HepG2 (cell line): ENCODE measurements at regions of chr6 and their contacts with region 1.

Region 1: GRCh38 chr6:48111143-48111506 is at the start of gene PTCHD4:
- DNase-seq: peak; percentile 86
- ATAC-seq: peak; percentile 99
- H3K4me3 ChIP-seq: peak within 1 kb of the TSS; percentile 59 to 93 (median 73)
- H3K27ac ChIP-seq: peak within 1 kb of the TSS; percentile 97
- H3K4me1 ChIP-seq: peaks cover 32% of the 10 kb centered on the region
- H3K27me3 ChIP-seq: no peaks in the 10 kb centered on the region; a peak in 2 of 5 replicates
- CTCF ChIP-seq: 0 out of 2 replicates have a peak, but pooled peaks have one; percentile 21
- EP300 ChIP-seq: peak in 1 of 2 experiments; percentile 50; a peak in 1 of 4 replicates
- POLR2A ChIP-seq: peak; percentile 75 to 89; a peak in 3 of 4 replicates
- RAD21 ChIP-seq: no peak
- total RNA-seq, gene PTCHD4: 32.9 and 35.7 TPM in 2 replicates

Region 2: DNA sequence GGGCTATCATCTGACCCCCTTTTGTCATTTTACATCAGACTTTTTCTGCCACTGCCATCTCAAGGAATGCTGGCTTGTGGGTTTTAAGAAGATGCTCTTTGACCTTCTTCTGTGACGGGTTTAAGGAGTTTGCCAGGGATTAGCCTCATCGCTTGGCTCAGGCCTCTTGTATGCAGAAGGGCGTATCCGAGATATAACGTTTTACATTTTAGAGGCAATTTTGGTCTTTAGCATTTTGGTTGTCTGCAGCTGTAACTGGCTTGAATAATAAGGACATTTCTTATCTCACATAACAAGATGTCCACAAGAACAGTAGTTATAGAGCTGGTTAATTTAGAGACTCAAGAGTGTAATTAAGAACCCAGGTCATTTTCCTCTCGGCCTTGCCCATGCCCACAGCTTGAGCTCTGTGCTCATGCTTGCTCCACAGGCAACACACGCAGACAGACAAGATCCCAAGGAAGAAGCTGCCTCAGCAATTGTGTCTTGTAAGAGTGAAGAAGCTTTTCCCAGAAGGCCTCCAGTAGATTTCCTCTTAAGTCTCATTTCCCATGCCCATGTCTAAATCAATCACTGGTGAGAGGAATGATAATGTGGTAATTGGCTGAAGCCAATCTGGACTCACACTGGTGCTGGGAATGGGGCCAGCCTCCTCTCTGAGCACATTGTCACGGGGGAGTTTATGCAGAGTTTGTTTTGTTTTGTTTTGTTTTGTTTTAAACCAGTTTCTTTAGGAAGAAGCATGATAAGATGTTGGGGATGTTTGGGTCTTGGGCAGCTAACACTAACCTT is 37.0 kb before region 1 on chr6:
- CTCF ChIA-PET with region 1: no interaction called
- POLR2A ChIA-PET with region 1: no interaction called
- in situ Hi-C with region 1: no loop called
- intact Hi-C with region 1: loop called (anchors 5 kb)
- DNase-seq: no peak
- ATAC-seq: no peak
- H3K4me3 ChIP-seq: no peak overlapping the region
- H3K27ac ChIP-seq: no peak overlapping the region
- H3K4me1 ChIP-seq: peaks cover 31% of the 10 kb centered on the region
- H3K27me3 ChIP-seq: no peaks in the 10 kb centered on the region
- CTCF ChIP-seq: no peak
- EP300 ChIP-seq: no peak
- POLR2A ChIP-seq: no peak
- RAD21 ChIP-seq: no peak

Region 3: GRCh38 chr6:48213076-48213788 is 102.1 kb after region 1 on chr6:
- CTCF ChIA-PET with region 1: no interaction called
- POLR2A ChIA-PET with region 1: no interaction called
- in situ Hi-C with region 1: no loop called
- intact Hi-C with region 1: loop called (anchors 2 kb)
- DNase-seq: peak; percentile 70
- ATAC-seq: peak; percentile 86
- H3K4me3 ChIP-seq: peak overlapping the region; percentile 51 to 62 (median 61)
- H3K27ac ChIP-seq: no peak overlapping the region
- H3K4me1 ChIP-seq: peaks cover 21% of the 10 kb centered on the region
- H3K27me3 ChIP-seq: no peaks in the 10 kb centered on the region
- CTCF ChIP-seq: 0 out of 2 replicates have a peak, but pooled peaks have one; percentile 4
- EP300 ChIP-seq: no peak
- POLR2A ChIP-seq: no peak
- RAD21 ChIP-seq: no peak

Region 4: GRCh38 chr6:48255094-48255493 is 144.0 kb after region 1 on chr6:
- CTCF ChIA-PET with region 1: no interaction called
- POLR2A ChIA-PET with region 1: no interaction called
- in situ Hi-C with region 1: no loop called
- intact Hi-C with region 1: no loop called
- DNase-seq: peak; percentile 38
- ATAC-seq: peak; percentile 31; the same call in 1 of the 3 replicates
- H3K4me3 ChIP-seq: no peak overlapping the region
- H3K27ac ChIP-seq: no peak overlapping the region
- H3K4me1 ChIP-seq: no peaks in the 10 kb centered on the region
- H3K27me3 ChIP-seq: no peaks in the 10 kb centered on the region
- CTCF ChIP-seq: no peak
- EP300 ChIP-seq: no peak
- POLR2A ChIP-seq: no peak
- RAD21 ChIP-seq: no peak